Pancreas (tissue), 10 donors: ENCODE measurements at regions of chr15 and their contacts with region 1.

Region 1: GRCh38 chr15:100873029-100873677 is 6.5 kb upstream of the ALDH1A3 start:
- DNase-seq: peak in 5 of 6 donors; percentile 36 to 81 (median 51)
- ATAC-seq: peak; percentile 73 to 99 (median 92)
- H3K4me3 ChIP-seq: no peak overlapping the region
- H3K27ac ChIP-seq: no peak overlapping the region
- H3K4me1 ChIP-seq: no peaks in the 10 kb centered on the region
- H3K27me3 ChIP-seq: no peaks in the 10 kb centered on the region
- CTCF ChIP-seq: peak; percentile 83 to 95 (median 88)

Region 2: GRCh38 chr15:100553468-100553867 is 319.7 kb before region 1 on chr15:
- intact Hi-C with region 1: no loop called
- DNase-seq: peak in 1 of 6 donors; percentile 26
- ATAC-seq: no peak
- H3K4me3 ChIP-seq: no peak overlapping the region
- H3K27ac ChIP-seq: no peak overlapping the region
- H3K4me1 ChIP-seq: no peaks in the 10 kb centered on the region
- H3K27me3 ChIP-seq: no peaks in the 10 kb centered on the region
- CTCF ChIP-seq: no peak

Region 3: GRCh38 chr15:100627789-100628395 is 245.3 kb before region 1 on chr15:
- intact Hi-C with region 1: loop called in 1 of 3 experiments (anchors 10 kb)
- DNase-seq: peak in 4 of 6 donors; percentile 32 to 78 (median 42)
- ATAC-seq: peak; percentile 89 to 99 (median 94)
- H3K4me3 ChIP-seq: no peak overlapping the region
- H3K27ac ChIP-seq: no peak overlapping the region
- H3K4me1 ChIP-seq: no peaks in the 10 kb centered on the region
- H3K27me3 ChIP-seq: no peaks in the 10 kb centered on the region
- CTCF ChIP-seq: peak; percentile 72 to 78 (median 74)

Region 4: DNA sequence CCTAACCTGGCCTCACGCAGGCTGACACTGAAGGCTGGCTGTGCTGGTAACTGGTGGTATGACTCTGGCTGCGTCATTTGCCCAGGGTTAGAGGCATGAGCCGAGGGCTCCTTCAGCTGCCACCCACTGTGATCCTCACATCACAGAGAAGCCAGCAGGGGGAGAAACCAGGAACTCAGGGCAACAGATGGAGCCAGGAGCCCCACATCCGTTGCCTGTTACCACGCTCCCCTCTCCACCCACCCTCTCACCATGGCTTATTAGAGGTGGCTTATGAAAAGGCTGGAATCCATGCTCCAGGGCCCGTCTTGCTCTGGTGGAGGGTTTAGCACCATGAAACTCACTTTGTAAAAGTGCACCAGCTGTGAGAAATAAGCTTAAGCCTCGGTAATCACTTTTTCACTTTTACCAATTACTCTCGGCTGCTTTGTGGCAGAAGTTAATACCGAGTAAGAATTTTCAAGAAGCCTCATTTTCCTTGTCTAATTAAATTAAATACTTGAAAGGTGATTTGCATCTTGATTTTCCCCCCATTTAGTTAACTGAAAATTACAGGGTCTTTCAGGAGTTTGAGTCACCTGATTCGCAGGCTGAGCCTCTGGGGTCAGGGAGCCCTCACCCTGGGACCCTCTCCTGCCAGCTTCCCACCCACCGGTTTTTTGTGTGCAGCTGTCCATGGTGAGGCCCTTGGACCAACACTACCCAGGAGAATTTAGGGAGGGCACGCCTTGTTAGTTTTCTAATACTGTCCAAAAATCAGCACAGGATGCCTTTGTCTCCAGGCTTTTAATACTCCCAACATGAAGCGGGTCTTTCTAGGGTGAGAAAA is 209.9 kb before region 1 on chr15:
- intact Hi-C with region 1: loop called in 1 of 3 experiments (anchors 10 kb)
- DNase-seq: no peak
- ATAC-seq: no peak
- H3K4me3 ChIP-seq: no peak overlapping the region
- H3K27ac ChIP-seq: no peak overlapping the region
- H3K4me1 ChIP-seq: no peaks in the 10 kb centered on the region
- H3K27me3 ChIP-seq: no peaks in the 10 kb centered on the region
- CTCF ChIP-seq: no peak

Region 5: DNA sequence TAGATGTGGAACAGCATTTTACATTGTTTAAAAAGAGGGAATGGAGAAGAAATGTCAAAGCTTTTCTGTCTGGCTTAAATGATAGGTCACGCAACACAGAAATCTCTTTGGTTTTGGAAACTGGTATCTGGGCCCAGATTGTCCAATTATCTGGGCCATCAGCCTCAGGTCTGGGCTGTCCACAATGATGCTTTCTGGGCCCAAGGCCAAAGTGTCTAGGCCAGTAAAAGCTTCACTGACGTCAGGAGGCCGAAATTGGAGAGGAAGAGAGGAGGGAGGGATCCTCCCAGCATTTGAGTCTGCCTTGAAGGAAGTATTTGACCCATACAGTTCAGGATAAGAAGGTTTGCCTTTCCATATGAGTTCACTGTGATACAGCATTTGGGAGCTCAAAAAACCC is 54.2 kb before region 1 on chr15:
- intact Hi-C with region 1: no loop called
- DNase-seq: no peak
- ATAC-seq: no peak
- H3K4me3 ChIP-seq: no peak overlapping the region
- H3K27ac ChIP-seq: no peak overlapping the region
- H3K4me1 ChIP-seq: no peaks in the 10 kb centered on the region
- H3K27me3 ChIP-seq: no peaks in the 10 kb centered on the region
- CTCF ChIP-seq: no peak